ENCODE measurements at regions of chr4 and their contacts with region 1.

Region 1: DNA sequence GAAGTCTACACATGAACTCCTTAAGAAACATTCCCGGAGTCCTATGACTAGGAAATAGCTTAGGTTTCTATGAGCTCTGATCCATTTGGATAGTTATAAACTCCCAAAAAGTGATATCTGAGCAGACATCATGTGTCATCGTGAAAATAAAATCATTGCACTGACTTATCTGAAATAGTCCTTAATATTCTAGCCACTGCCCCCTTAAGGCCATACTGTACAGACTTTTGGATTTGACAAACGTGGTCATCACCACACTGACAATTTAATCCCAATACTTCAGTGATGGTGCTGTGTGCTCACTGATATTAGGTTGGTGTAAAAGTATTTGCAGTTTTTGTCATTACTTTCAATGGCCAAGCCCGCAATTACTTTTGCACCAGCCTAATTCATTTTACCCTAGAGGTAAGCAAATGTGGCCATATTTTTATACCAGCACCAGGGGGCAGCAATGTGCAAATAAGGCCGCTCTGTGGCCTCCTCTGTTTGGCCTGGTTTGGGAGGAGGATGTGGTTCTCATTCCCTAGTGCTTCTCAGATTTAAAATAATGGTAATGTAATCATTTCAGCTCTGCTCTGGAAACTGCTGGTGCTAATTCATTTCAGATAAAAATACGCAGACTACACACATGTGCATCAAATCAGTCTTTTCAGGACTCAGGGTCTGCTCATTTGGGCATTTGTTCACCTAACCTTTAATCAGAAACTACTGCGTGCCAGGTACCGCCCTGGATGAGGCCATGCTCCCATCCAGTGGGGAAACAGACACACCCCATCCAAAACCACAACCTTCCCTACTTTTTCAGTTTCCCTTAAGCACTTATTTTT is 196.4 kb upstream of the C1QTNF7 start:
- DNase-seq: peak; percentile 79
- ATAC-seq: peak; percentile 79
- H3K4me3 ChIP-seq: no peak overlapping the region
- H3K4me3 Mint-ChIP-seq: no peak overlapping the region
- H3K27ac ChIP-seq: no peak overlapping the region
- H3K27ac Mint-ChIP-seq: no peak overlapping the region
- H3K4me1 ChIP-seq: peaks cover 13 to 16% of the 10 kb centered on the region in 2 donors
- H3K4me1 Mint-ChIP-seq: peaks cover 25% of the 10 kb centered on the region
- H3K27me3 ChIP-seq: no peaks in the 10 kb centered on the region
- H3K27me3 Mint-ChIP-seq: peaks cover 3% of the 10 kb centered on the region
- CTCF ChIP-seq: peak; percentile 79

Region 2: GRCh38 chr4:15270201-15270600 is 38.7 kb after region 1 on chr4:
- CTCF ChIA-PET with region 1: no interaction called
- POLR2A ChIA-PET with region 1: no interaction called
- intact Hi-C with region 1: no loop called
- DNase-seq: no peak
- ATAC-seq: no peak
- H3K4me3 ChIP-seq: no peak overlapping the region
- H3K4me3 Mint-ChIP-seq: no peak overlapping the region
- H3K27ac ChIP-seq: no peak overlapping the region
- H3K27ac Mint-ChIP-seq: no peak overlapping the region
- H3K4me1 ChIP-seq: no peaks in the 10 kb centered on the region
- H3K4me1 Mint-ChIP-seq: no peaks in the 10 kb centered on the region
- H3K27me3 ChIP-seq: no peaks in the 10 kb centered on the region
- H3K27me3 Mint-ChIP-seq: peaks cover 7% of the 10 kb centered on the region
- CTCF ChIP-seq: no peak

Region 3: DNA sequence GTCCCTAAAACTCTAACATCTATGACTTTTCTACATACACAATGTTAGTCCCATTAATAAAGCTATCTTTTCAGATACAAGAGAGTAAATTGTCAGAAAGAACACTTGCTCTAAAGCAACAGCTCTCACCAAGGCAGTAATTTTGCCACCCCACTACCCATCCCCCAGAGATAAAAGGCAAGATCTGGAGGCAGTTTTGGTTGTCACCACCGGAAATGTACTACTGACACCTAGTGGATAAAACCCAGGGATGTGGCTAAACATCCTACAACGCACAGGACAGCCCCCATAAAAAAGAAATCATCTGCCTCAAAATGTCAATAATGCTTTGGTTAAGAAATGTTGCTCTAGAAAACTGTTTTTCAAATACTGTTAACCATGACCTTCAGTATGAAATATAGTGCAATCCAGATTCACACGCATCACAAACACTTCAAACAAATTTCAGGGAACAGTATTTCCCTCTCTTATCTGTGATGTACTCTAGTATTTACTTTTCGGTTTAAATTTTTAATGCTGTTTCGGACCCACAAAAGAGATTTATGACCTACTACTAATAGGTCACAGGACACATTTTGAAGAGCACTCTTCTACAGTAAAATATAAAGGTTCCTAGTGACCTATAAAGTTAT is 418.6 kb after region 1 on chr4:
- CTCF ChIA-PET with region 1: interaction called, 6 read pairs
- POLR2A ChIA-PET with region 1: no interaction called
- intact Hi-C with region 1: loop called (anchors 1 kb)
- DNase-seq: peak; percentile 78
- ATAC-seq: peak; percentile 54
- H3K4me3 ChIP-seq: no peak overlapping the region
- H3K4me3 Mint-ChIP-seq: no peak overlapping the region
- H3K27ac ChIP-seq: no peak overlapping the region
- H3K27ac Mint-ChIP-seq: no peak overlapping the region
- H3K4me1 ChIP-seq: peaks cover 22 to 42% of the 10 kb centered on the region in 2 donors
- H3K4me1 Mint-ChIP-seq: peaks cover 50% of the 10 kb centered on the region
- H3K27me3 ChIP-seq: no peaks in the 10 kb centered on the region
- H3K27me3 Mint-ChIP-seq: no peaks in the 10 kb centered on the region
- CTCF ChIP-seq: peak; percentile 77

Region 4: DNA sequence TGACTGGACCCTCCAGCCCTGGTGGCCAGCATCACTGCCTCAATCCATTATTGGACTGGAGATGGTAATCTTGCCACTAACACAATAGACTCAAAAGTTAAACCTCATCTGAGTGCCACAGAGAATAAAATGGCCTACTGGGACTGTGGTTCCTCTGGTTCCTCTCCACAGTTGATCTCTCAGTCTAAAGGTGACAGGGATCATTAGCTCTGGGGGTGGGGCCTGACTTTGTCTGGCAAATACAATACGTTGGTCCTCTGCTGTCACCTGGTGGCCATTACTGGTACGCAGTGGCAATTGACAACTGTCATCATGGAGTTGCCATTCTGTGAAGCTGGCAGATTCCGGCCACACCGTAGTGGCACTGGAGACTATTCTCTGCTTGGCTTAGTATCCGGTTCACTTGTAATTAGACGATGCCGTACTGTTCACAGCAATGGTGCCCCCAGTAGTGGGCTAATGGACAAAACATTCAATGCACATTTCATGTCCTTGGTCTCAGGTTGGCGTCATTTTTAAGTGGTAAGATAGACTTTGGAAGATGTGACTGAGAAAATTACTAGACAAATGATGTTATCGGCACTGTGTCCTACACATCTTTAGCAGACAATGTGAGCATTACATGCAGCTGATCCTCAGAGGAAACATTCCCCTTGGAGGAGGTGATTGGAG is 724.8 kb after region 1 on chr4:
- CTCF ChIA-PET with region 1: no interaction called
- POLR2A ChIA-PET with region 1: no interaction called
- intact Hi-C with region 1: loop called (anchors 5 kb)
- DNase-seq: peak; percentile 81
- ATAC-seq: peak; percentile 98
- H3K4me3 ChIP-seq: no peak overlapping the region
- H3K4me3 Mint-ChIP-seq: no peak overlapping the region
- H3K27ac ChIP-seq: no peak overlapping the region
- H3K27ac Mint-ChIP-seq: no peak overlapping the region
- H3K4me1 ChIP-seq: peaks cover 0 to 3% of the 10 kb centered on the region in 2 donors
- H3K4me1 Mint-ChIP-seq: peaks cover 9% of the 10 kb centered on the region
- H3K27me3 ChIP-seq: no peaks in the 10 kb centered on the region
- H3K27me3 Mint-ChIP-seq: peaks cover 6% of the 10 kb centered on the region
- CTCF ChIP-seq: peak; percentile 81

Measured in B cell (primary cell).